ENCODE measurements at regions of chr16 and their contacts with region 1.

Region 1: GRCh38 chr16:27455700-27456099 is 53.7 kb downstream of the IL21R start:
- DNase-seq: peak in 1 of 2 donors; percentile 71
- ATAC-seq: peak; percentile 33
- H3K4me3 ChIP-seq: no peak overlapping the region
- H3K27ac ChIP-seq: no peak overlapping the region
- H3K4me1 ChIP-seq: no peaks in the 10 kb centered on the region
- H3K27me3 ChIP-seq: no peaks in the 10 kb centered on the region

Region 2: GRCh38 chr16:27154705-27155521 is 300.8 kb before region 1 on chr16:
- intact Hi-C with region 1: loop called (anchors 2 to 5 kb)
- DNase-seq: peak; percentile 64 to 91
- ATAC-seq: peak; percentile 84
- H3K4me3 ChIP-seq: no peak overlapping the region
- H3K27ac ChIP-seq: no peak overlapping the region
- H3K4me1 ChIP-seq: no peaks in the 10 kb centered on the region
- H3K27me3 ChIP-seq: no peaks in the 10 kb centered on the region

Region 3: DNA sequence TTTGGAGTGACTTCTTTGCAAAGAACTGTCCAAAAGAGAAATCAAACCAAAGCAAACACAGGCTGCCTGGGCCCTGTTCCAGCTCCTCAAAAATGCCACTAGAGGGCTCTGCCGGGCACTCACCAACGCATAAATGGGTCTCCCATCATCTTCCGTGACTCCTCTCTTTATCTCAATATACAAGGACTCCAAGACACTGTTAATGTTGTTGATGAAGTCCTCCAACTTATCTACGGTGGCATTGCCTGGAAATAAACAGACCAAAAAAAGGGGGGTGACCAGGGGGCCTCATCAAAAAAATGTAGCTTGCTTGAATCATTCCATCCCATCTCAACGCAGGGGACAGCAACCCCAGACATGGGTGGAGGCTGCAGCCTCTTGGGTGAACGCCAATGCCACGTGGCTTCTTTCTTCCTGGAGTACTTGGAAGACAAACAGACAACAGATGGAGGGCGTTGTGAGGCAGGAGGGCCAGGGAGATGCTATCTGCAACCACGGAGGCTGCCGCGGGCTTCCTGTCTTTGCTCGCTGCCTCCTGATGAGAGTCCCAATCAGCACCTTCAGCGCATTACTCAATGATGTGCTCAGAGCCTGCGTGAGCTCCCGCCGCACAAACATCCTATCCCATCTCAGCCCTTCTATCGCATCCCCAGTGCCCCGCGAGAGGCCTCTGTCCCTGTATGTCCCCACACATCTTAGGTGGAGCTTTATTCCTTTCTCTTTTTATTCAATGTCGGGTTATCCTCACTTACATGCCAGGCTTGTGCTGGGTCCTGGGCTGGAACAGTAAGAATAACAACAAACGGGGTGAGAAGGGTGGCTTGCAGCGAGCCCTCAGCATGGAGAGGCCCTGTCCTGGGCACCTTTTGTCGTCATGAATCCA is 220.4 kb before region 1 on chr16:
- intact Hi-C with region 1: loop called in 1 of 2 experiments (anchors 5 kb)
- DNase-seq: peak; percentile 92 to 94
- ATAC-seq: peak; percentile 85
- H3K4me3 ChIP-seq: no peak overlapping the region
- H3K27ac ChIP-seq: no peak overlapping the region
- H3K4me1 ChIP-seq: no peaks in the 10 kb centered on the region
- H3K27me3 ChIP-seq: no peaks in the 10 kb centered on the region

Region 4: DNA sequence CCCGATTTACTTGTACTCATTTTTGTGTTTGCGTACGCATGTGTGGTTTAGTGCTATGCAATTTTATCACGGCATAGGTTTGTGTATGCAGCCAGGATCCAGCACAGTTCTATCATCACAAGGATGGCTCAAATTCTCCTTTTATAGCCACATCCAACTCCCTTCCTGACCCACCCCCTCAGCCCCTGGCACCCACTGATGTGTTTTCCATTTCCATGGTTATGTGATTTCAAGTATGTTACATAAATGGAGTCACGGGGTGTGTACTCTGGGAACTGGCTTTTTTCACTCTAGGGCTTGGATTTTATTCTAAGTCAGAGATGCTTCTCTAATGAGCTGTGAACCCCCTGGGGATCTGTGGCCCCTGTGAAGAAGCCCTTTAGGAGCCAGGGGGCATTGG is 125.2 kb before region 1 on chr16:
- intact Hi-C with region 1: no loop called
- DNase-seq: peak; percentile 89
- ATAC-seq: peak; percentile 75
- H3K4me3 ChIP-seq: no peak overlapping the region
- H3K27ac ChIP-seq: peak overlapping the region in 1 of 2 donors; percentile 89
- H3K4me1 ChIP-seq: peaks cover 0 to 2% of the 10 kb centered on the region in 2 donors
- H3K27me3 ChIP-seq: no peaks in the 10 kb centered on the region

Region 5: GRCh38 chr16:27367461-27368357 is 88.0 kb before region 1 on chr16:
- intact Hi-C with region 1: loop called in 1 of 2 experiments (anchors 5 kb)
- DNase-seq: peak; percentile 90 to 91
- ATAC-seq: peak; percentile 88
- H3K4me3 ChIP-seq: no peak overlapping the region
- H3K27ac ChIP-seq: no peak overlapping the region
- H3K4me1 ChIP-seq: no peaks in the 10 kb centered on the region
- H3K27me3 ChIP-seq: no peaks in the 10 kb centered on the region

Measured in aorta (tissue), 5 donors.